Activated CD4-positive, alpha-beta memory T cell treated with anti-CD3 and anti-CD28 coated beads for 36 hours (primary cell): ENCODE measurements at regions of chr9 and their contacts with region 1.

Region 1: DNA sequence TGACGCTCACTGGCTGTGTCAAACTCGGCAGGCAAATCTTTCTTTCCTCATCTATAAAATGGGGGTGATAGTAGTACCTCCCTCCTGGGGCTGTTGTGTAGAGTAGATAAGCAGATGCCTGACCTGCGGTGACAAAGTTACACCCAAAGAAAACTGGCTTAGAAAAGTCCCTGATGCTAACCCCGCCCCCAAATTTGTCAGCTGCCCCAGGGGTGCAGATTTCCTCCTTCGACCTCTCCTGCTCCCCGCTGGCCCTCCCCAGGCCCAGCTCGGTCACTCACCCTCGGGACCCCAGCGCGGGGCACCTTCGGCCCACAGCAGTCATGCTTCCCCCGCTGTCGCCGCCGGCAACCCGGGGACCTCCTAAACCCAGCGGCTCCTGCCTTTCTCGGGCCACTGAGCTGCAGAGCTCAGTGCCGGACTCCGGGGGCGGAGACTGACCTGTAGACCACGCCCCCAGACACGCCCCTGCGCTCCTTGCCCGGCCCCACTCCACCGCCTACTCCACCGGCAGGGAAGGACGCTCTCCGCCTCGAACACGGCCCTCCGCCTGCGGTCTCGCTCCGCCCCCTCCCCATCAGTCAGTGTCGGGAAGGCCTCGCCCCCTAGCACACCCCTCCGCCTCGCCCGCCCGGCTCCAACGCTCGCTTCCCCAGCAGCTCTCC is 7.4 kb downstream of the SH2D3C start:
- DNase-seq: peak; percentile 99
- H3K4me3 Mint-ChIP-seq: peak overlapping the region; percentile 89
- H3K27ac Mint-ChIP-seq: peak overlapping the region; percentile 85
- H3K4me1 Mint-ChIP-seq: peaks cover 56% of the 10 kb centered on the region
- H3K27me3 Mint-ChIP-seq: no peaks in the 10 kb centered on the region

Region 2: GRCh38 chr9:127293328-127293727 is 477.7 kb before region 1 on chr9:
- CTCF ChIA-PET with region 1: no interaction called
- POLR2A ChIA-PET with region 1: no interaction called
- intact Hi-C with region 1: no loop called
- DNase-seq: no peak
- H3K4me3 Mint-ChIP-seq: no peak overlapping the region
- H3K27ac Mint-ChIP-seq: no peak overlapping the region
- H3K4me1 Mint-ChIP-seq: no peaks in the 10 kb centered on the region
- H3K27me3 Mint-ChIP-seq: peaks cover 6% of the 10 kb centered on the region

Region 3: GRCh38 chr9:127694890-127695720 is 75.9 kb before region 1 on chr9:
- CTCF ChIA-PET with region 1: no interaction called
- POLR2A ChIA-PET with region 1: no interaction called
- intact Hi-C with region 1: no loop called
- DNase-seq: no peak
- H3K4me3 Mint-ChIP-seq: no peak overlapping the region
- H3K27ac Mint-ChIP-seq: no peak overlapping the region
- H3K4me1 Mint-ChIP-seq: peaks cover 12% of the 10 kb centered on the region
- H3K27me3 Mint-ChIP-seq: no peaks in the 10 kb centered on the region

Region 4: DNA sequence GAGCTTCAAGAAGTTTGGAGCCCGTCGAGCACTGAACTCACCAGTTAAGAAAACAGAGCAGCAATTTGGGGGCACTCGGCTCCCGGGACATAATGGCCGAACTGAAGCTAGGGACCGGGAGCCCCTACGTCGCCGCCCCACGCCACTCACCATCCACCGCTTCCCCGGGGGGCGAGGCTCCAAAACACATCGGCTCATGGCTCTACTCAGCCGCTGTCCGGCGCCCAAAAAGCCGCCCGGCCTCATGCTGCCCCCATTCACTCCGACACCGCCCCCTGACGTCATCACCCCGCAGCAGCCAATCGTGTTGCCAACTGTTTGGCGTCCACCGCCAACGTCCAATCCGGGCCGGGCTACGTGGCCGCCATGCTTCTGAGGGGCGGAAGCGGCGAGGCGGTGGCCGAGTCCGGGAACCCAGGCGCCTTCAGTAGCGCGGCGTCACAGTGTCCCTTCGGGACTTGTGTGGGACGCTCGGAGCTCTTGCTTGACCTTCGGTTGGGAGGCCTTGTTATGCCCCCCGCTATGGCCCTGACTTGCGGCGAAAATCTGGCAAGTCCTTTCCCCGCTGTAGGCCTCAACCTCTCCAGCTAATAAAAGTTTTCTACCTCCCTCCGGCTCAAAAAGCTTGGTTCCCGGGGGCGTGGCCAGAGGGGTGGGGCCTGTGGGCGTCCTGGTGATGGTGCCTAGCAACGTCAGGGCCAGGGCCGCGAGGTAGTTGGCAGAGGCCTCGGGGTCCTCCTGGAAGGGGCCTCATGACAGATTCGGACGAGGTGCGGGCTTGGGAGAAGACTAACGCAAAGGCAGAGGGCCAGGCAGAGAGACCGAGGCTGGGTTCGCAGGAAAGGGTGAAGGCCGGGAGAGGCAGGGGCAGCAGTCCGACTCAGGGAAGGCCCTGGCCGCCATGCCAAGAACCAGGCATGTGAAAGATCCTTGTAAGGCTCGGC is 55.4 kb before region 1 on chr9 and contains the starts of genes PTRH1 and TTC16:
- CTCF ChIA-PET with region 1: no interaction called
- POLR2A ChIA-PET with region 1: no interaction called
- intact Hi-C with region 1: loop called (anchors 1 kb)
- DNase-seq: peak; percentile 98
- H3K4me3 Mint-ChIP-seq: peak within 1 kb of the TSS; percentile 90
- H3K27ac Mint-ChIP-seq: peak within 1 kb of the TSS; percentile 74
- H3K4me1 Mint-ChIP-seq: peaks cover 29% of the 10 kb centered on the region
- H3K27me3 Mint-ChIP-seq: no peaks in the 10 kb centered on the region
- total RNA-seq, gene PTRH1: 20.9 to 22.7 TPM
- total RNA-seq, gene TTC16: 0.61 to 0.69 TPM

Region 5: GRCh38 chr9:127802576-127803443 is 31.8 kb after region 1 on chr9 and contains the start of gene FPGS:
- CTCF ChIA-PET with region 1: interaction called, 3 read pairs
- POLR2A ChIA-PET with region 1: interaction called, 7 read pairs
- intact Hi-C with region 1: loop called (anchors 2 kb)
- DNase-seq: peak; percentile 91
- H3K4me3 Mint-ChIP-seq: peak within 1 kb of the TSS; percentile 88
- H3K27ac Mint-ChIP-seq: peak within 1 kb of the TSS; percentile 88
- H3K4me1 Mint-ChIP-seq: peaks cover 24% of the 10 kb centered on the region
- H3K27me3 Mint-ChIP-seq: no peaks in the 10 kb centered on the region
- total RNA-seq, gene FPGS: 80.0 to 83.9 TPM

Region 6: DNA sequence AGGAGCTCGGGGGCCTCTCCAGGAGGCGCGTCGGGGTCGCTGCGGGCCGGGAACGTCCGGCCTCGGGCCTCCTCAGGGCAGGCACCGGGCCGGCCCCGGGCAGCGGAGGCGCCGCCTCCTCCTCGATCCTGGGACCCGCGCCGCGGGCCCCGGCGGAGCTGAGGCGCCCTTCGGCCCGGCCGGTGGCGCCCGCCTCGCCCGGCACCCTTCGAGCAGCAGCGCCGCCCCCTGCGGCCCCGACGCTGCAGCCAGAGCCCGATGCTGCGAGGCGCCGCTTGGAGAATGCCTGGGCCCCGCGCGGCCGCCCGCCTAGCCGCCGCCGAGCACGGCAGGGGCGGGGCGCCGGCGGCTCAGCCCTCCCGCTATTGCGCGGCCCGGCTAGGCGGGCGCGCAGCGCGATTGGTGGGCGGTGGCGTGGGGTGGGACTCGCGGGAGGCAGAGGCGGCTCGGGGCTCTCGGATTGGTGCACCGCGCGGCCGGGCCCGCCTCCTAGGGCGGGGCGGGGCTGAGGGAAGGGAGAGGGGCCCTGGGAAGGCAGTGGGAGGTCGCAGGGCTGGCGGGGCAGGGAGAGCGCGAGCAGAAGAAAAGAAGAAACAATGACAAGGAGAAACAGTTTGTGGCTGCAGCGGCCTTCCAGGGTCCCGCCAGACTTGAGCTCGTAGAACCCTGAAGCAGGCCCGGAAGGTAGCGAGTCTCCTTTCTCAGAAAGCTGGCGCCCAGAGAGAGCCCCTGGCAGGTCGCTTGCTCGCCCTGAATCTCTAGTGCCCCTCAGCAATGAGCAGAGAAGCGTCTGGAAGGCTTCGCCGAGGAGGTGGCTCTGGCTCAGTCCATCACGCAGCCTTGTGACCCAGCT is 209.9 kb after region 1 on chr9 and contains the start of gene EEIG1:
- CTCF ChIA-PET with region 1: no interaction called
- POLR2A ChIA-PET with region 1: no interaction called
- intact Hi-C with region 1: loop called (anchors 5 kb)
- DNase-seq: peak; percentile 98
- H3K4me3 Mint-ChIP-seq: peak within 1 kb of the TSS; percentile 96
- H3K27ac Mint-ChIP-seq: peak within 1 kb of the TSS; percentile 93
- H3K4me1 Mint-ChIP-seq: peaks cover 43% of the 10 kb centered on the region
- H3K27me3 Mint-ChIP-seq: no peaks in the 10 kb centered on the region
- total RNA-seq, gene EEIG1: 50.7 to 58.0 TPM

Region 7: DNA sequence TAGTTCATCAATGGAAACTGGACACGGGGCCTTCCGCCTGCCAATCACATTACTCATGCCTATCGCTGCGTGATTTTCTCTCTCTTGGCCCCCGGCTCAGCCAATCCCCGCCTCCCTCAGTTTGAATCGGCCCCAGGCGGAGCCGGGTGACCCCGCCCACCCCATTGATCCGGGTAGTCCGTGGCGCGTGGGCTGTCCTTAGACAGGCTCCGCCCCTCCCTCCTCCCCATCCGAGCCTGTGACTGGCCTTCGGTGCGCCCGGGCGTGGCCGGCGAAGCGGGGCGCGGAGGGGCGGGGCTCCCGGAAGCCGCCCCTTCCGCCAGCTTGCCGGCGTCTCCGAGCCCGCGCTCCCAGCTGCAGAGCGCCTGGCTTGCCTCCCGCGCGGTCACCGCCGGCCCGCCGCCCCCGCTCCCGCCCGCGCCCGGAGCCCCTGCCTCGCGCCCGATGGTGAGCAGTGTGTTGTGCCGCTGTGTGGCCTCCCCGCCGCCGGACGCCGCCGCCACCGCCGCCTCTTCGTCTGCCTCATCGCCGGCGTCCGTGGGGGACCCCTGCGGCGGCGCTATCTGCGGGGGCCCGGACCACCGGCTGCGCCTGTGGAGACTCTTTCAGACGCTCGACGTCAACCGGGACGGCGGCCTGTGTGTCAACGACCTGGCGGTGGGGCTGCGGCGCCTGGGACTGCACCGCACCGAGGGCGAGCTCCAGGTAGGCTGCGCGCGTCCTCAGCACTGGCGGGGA is 297.0 kb after region 1 on chr9 and contains the start of gene SLC25A25:
- CTCF ChIA-PET with region 1: no interaction called
- POLR2A ChIA-PET with region 1: no interaction called
- intact Hi-C with region 1: loop called (anchors 10 kb)
- DNase-seq: peak; percentile 100
- H3K4me3 Mint-ChIP-seq: peak within 1 kb of the TSS; percentile 96
- H3K27ac Mint-ChIP-seq: peak within 1 kb of the TSS; percentile 91
- H3K4me1 Mint-ChIP-seq: peaks cover 49% of the 10 kb centered on the region
- H3K27me3 Mint-ChIP-seq: no peaks in the 10 kb centered on the region
- total RNA-seq, gene SLC25A25: 17.1 to 17.3 TPM